ENCODE measurements at regions of chr12 and their contacts with region 1.

Region 1: DNA sequence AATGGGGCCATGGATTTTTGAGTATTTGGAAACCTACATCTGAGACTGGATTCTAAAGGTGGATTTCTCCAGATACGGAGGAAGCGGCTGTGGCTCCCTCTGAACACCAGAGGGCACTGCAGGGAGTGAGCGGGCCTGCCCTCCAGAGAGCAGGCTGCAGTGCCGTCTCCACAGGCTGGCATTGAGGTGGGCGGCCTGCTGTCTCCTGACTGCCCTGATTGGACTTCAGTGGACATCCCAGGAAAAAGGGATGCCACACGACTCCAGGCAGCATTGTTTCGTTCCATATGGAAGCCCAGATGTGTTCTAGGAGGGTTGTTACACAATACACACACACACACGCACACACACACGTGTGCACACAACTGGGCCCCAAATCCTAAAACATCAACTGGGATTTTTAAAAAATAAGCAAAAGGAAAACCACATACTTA is 20.9 kb upstream of the ANO2 start:
- DNase-seq: no peak
- ATAC-seq: peak; percentile 97
- H3K4me3 ChIP-seq: no peak overlapping the region
- H3K27ac ChIP-seq: no peak overlapping the region
- H3K4me1 ChIP-seq: no peaks in the 10 kb centered on the region
- H3K27me3 ChIP-seq: peaks cover 0 to 9% of the 10 kb centered on the region in 2 experiments
- CTCF ChIP-seq: peak; percentile 72 to 82 (median 77)
- EP300 ChIP-seq: no peak
- POLR2A ChIP-seq: no peak
- RAD21 ChIP-seq: peak; percentile 36; the same call in 1 of the 2 replicates

Region 2: GRCh38 chr12:5830111-5830510 is 135.9 kb before region 1 on chr12:
- CTCF ChIA-PET with region 1: no interaction called
- POLR2A ChIA-PET with region 1: no interaction called
- RAD21 ChIA-PET with region 1: no interaction called
- SMC1A ChIA-PET with region 1: no interaction called
- in situ Hi-C with region 1: no loop called
- intact Hi-C with region 1: no loop called
- DNase-seq: no peak
- ATAC-seq: no peak
- H3K4me3 ChIP-seq: no peak overlapping the region
- H3K27ac ChIP-seq: no peak overlapping the region
- H3K4me1 ChIP-seq: no peaks in the 10 kb centered on the region
- H3K27me3 ChIP-seq: no peaks in the 10 kb centered on the region; a peak in 2 of 4 replicates
- CTCF ChIP-seq: no peak
- EP300 ChIP-seq: no peak
- POLR2A ChIP-seq: no peak
- RAD21 ChIP-seq: no peak

Region 3: GRCh38 chr12:6039894-6040568 is 74.1 kb after region 1 on chr12:
- CTCF ChIA-PET with region 1: interaction called, 9 read pairs
- POLR2A ChIA-PET with region 1: no interaction called
- RAD21 ChIA-PET with region 1: no interaction called
- SMC1A ChIA-PET with region 1: no interaction called
- in situ Hi-C with region 1: no loop called
- intact Hi-C with region 1: loop called (anchors 5 kb)
- DNase-seq: no peak
- ATAC-seq: peak; percentile 92
- H3K4me3 ChIP-seq: no peak overlapping the region
- H3K27ac ChIP-seq: no peak overlapping the region
- H3K4me1 ChIP-seq: no peaks in the 10 kb centered on the region
- H3K27me3 ChIP-seq: no peaks in the 10 kb centered on the region; a peak in 2 of 4 replicates
- CTCF ChIP-seq: peak; percentile 89 to 94 (median 93)
- EP300 ChIP-seq: no peak
- POLR2A ChIP-seq: no peak
- RAD21 ChIP-seq: peak; percentile 93